Ascending aorta (tissue), 2 donors: ENCODE measurements at regions of chr14 and their contacts with region 1.

Region 1: GRCh38 chr14:100285021-100285912 is 21.0 kb downstream of the SLC25A29 start:
- DNase-seq: peak in 1 of 2 donors; percentile 80
- H3K4me3 ChIP-seq: peak overlapping the region; percentile 82 to 93
- H3K27ac ChIP-seq: peak overlapping the region; percentile 85 to 86
- H3K4me1 ChIP-seq: peaks cover 0 to 5% of the 10 kb centered on the region in 2 donors
- H3K27me3 ChIP-seq: no peaks in the 10 kb centered on the region
- CTCF ChIP-seq: peak; percentile 86 to 92 (median 91)

Region 2: GRCh38 chr14:100246826-100247428 is 38.3 kb before region 1 on chr14:
- intact Hi-C with region 1: no loop called
- DNase-seq: no peak
- H3K4me3 ChIP-seq: no peak overlapping the region
- H3K27ac ChIP-seq: peak overlapping the region in 1 of 2 donors; percentile 33
- H3K4me1 ChIP-seq: peaks cover 3 to 49% of the 10 kb centered on the region in 2 donors
- H3K27me3 ChIP-seq: no peaks in the 10 kb centered on the region
- CTCF ChIP-seq: peak in 2 of 3 experiments; percentile 30 to 57

Region 3: DNA sequence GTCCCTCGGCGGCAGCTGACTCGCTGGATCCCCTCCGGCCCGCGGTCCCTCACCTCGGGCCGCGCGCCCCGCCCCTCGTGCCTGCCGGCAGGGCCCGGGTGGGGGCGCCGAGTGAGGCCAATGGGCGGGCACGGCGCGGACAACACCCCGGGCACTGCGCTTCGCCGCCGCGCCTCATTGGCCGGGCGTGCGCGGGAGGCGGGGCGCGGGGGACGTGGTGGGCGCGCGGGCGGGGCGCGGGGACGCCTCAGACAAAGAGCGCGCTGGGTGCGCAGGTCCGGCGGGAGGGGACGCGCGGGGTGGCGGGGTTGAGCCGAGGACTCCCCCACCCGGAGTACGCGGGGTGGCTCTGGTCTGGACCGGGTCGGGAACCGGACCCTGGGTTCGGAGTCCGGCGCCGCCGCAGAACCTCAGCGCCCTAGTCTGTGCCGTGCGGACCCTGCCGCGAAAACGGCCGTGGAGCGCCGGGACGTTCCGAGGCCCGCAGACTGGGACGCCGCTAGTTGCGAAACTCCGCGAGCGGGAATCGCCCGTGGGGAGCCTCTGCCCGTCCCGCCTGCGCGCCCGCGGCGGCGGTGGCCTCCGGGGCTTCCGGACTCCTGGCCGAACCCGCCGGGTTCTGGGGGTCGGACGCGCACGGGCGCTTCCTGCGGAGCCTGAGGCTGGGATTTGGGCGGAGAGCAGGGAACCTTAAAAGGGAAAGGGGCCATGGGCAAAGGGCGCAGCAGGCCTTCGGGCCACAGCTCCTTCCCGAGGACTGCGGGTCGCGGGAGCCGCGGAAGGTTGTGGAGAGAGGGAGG is 21.4 kb after region 1 on chr14 and contains the start of gene SLC25A29:
- intact Hi-C with region 1: loop called (anchors 1 kb)
- DNase-seq: peak; percentile 54 to 95
- H3K4me3 ChIP-seq: peak within 1 kb of the TSS; percentile 90 to 95
- H3K27ac ChIP-seq: peak within 1 kb of the TSS; percentile 74 to 83
- H3K4me1 ChIP-seq: peaks cover 3 to 12% of the 10 kb centered on the region in 2 donors
- H3K27me3 ChIP-seq: no peaks in the 10 kb centered on the region
- CTCF ChIP-seq: no peak
- total RNA-seq, gene SLC25A29: 193 TPM

Region 4: GRCh38 chr14:100317912-100318808 is 32.9 kb after region 1 on chr14:
- intact Hi-C with region 1: loop called (anchors 1 kb)
- DNase-seq: peak in 1 of 2 donors; percentile 88
- H3K4me3 ChIP-seq: peak overlapping the region; percentile 54 to 65
- H3K27ac ChIP-seq: peak overlapping the region; percentile 53 to 58
- H3K4me1 ChIP-seq: peaks cover 4 to 6% of the 10 kb centered on the region in 2 donors
- H3K27me3 ChIP-seq: no peaks in the 10 kb centered on the region
- CTCF ChIP-seq: peak; percentile 86 to 94 (median 91)